Activated T-helper 2 cell treated with anti-CD3 and anti-CD28 coated beads, Interferon-gamma antibody, Interleukin-2, Interleukin-4, amounts not matched to agents 10 μg/mL and 5 μg/mL and 100 μg/mL, durations not matched to agents 14 hours and 24 hours and 36 hours (primary cell): ENCODE measurements at regions of chr2 and their contacts with region 1.

Region 1: DNA sequence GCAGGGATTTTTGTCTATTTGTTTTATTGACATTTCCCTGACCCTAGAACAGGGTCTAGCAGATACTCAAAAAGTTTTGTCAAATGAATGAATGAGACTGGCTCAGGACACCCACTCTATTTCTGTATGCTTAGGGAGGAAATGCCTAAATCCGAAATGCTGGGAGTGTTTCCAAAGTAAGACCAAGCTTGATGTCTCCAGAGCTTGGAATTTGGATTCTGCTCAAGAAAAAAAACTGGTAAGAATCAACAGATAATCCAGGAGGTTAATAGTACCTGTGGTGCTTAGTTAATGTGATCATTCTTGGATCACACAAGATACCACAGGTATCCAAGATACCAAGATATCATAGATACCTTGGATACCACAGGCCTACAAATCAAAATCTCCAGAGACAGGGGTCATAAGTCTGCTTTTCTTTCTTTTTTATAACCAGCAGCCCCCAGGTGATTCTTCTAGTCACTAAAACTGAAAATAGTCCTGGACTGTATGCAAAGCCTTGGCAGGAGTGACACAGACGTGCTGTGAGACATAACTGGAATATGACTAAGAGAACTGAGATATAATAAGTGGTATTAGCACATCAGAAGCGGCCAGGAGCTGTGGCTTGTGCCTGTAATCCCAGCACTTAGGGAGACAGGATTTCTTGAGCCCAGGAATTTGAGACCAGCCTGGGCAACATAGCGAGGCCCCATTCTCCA is 39.9 kb upstream of the SP3 start:
- DNase-seq: no peak
- H3K4me3 Mint-ChIP-seq: no peak overlapping the region
- H3K27ac Mint-ChIP-seq: no peak overlapping the region
- H3K4me1 Mint-ChIP-seq: peaks cover 10% of the 10 kb centered on the region
- H3K27me3 Mint-ChIP-seq: peaks cover 8% of the 10 kb centered on the region

Region 2: GRCh38 chr2:173978447-173978846 is 26.6 kb before region 1 on chr2:
- intact Hi-C with region 1: loop called (anchors 2 kb)
- DNase-seq: no peak
- H3K4me3 Mint-ChIP-seq: no peak overlapping the region
- H3K27ac Mint-ChIP-seq: peak overlapping the region; percentile 70
- H3K4me1 Mint-ChIP-seq: peaks cover 30% of the 10 kb centered on the region
- H3K27me3 Mint-ChIP-seq: no peaks in the 10 kb centered on the region